ENCODE measurements at regions of chr9 and their contacts with region 1.

Region 1: GRCh38 chr9:8224381-8224801 is 424.8 kb upstream of the DMAC1 start:
- DNase-seq: no peak
- ATAC-seq: no peak
- H3K4me3 ChIP-seq: no peak overlapping the region
- H3K27ac ChIP-seq: no peak overlapping the region
- H3K4me1 ChIP-seq: no peaks in the 10 kb centered on the region
- H3K27me3 ChIP-seq: no peaks in the 10 kb centered on the region
- CTCF ChIP-seq: no peak

Region 2: DNA sequence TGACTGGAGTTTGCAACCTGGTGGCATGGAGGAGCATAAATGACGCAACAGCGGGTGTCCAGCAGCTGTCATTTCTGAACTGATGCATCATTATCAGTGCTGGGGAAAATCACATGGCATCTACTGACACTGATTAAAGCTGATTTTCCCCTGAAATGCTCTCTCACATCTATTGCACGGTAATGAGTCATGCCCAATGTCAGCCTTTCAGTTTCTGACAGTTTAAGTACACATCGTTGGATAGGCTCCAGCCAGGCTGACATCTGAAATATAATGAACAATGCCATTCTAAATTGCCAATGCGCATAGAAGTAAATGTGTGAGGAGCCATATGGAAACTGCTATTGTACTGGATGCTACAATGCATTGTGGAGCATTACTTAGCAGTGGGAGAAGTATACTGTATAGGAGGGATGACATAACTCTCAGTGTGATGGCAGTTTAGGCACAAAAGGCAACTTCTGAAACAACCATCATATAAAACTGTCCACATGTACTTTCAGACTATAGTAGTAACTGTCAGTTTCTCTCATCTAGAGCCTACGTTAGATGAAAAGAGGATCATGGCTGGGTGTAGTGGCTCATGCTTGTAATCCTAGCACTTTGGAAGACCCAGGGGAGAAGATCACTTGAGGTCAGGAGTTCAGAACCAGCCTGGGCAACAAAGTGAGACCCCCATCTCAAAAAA is 35.5 kb before region 1 on chr9:
- intact Hi-C with region 1: loop called in 1 of 2 experiments (anchors 2 kb)
- DNase-seq: no peak
- ATAC-seq: no peak
- H3K4me3 ChIP-seq: no peak overlapping the region
- H3K27ac ChIP-seq: no peak overlapping the region
- H3K4me1 ChIP-seq: no peaks in the 10 kb centered on the region
- H3K27me3 ChIP-seq: no peaks in the 10 kb centered on the region
- CTCF ChIP-seq: no peak

Region 3: GRCh38 chr9:8613346-8613825 is 389.0 kb after region 1 on chr9:
- intact Hi-C with region 1: loop called in 1 of 2 experiments (anchors 10 kb)
- DNase-seq: no peak
- ATAC-seq: no peak
- H3K4me3 ChIP-seq: no peak overlapping the region
- H3K27ac ChIP-seq: no peak overlapping the region
- H3K4me1 ChIP-seq: no peaks in the 10 kb centered on the region
- H3K27me3 ChIP-seq: no peaks in the 10 kb centered on the region
- CTCF ChIP-seq: no peak

Measured in psoas muscle (tissue), 8 donors.